Psoas muscle (tissue), 8 donors: ENCODE measurements at regions of chr6 and their contacts with region 1.

Region 1: DNA sequence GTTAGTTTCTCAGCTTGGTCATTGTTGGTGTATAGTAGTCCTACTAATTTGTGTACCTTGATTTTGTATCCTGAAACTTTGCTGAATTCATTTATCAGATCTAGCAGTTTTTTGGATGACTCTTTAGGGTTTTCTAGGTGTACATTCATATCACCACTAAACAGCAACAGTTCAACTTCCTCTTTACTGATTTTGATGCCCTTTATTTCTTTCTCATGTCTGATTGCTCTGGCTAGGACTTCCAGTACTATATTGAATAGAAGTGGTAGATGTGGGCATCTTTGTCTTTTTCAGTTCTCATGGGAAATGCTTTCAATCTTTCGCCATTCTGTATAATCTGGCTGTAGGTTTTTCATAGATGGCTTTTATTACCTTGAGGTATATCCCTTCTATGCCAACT is 61.3 kb upstream of the HEY2 start:
- DNase-seq: no peak
- ATAC-seq: no peak
- H3K4me3 ChIP-seq: no peak overlapping the region
- H3K27ac ChIP-seq: no peak overlapping the region
- H3K4me1 ChIP-seq: no peaks in the 10 kb centered on the region
- H3K27me3 ChIP-seq: no peaks in the 10 kb centered on the region
- CTCF ChIP-seq: no peak

Region 2: GRCh38 chr6:125732398-125732797 is 44.3 kb after region 1 on chr6:
- intact Hi-C with region 1: loop called in 1 of 2 experiments (anchors 5 kb)
- DNase-seq: no peak
- ATAC-seq: no peak
- H3K4me3 ChIP-seq: no peak overlapping the region
- H3K27ac ChIP-seq: no peak overlapping the region
- H3K4me1 ChIP-seq: no peaks in the 10 kb centered on the region
- H3K27me3 ChIP-seq: peaks cover 0 to 1% (median 0%) of the 10 kb centered on the region in 3 donors
- CTCF ChIP-seq: no peak